Naive thymus-derived CD4-positive, alpha-beta T cell (primary cell): ENCODE measurements at regions of chr22 and their contacts with region 1.

Region 1: GRCh38 chr22:18001040-18001893 is 23.1 kb downstream of the MICAL3 start:
- DNase-seq: peak in 8 of 9 donors; percentile 18 to 77 (median 49)
- ATAC-seq: peak; percentile 69
- H3K4me3 ChIP-seq: peak overlapping the region; percentile 85
- H3K4me3 Mint-ChIP-seq: peak overlapping the region; percentile 79 to 96 (median 92)
- H3K27ac ChIP-seq: peak overlapping the region; percentile 63
- H3K27ac Mint-ChIP-seq: peak overlapping the region in 8 of 9 donors; percentile 62 to 97 (median 84)
- H3K4me1 ChIP-seq: peaks cover 13 to 20% of the 10 kb centered on the region in 2 donors
- H3K4me1 Mint-ChIP-seq: peaks cover 33 to 50% (median 47%) of the 10 kb centered on the region in 7 donors
- H3K27me3 ChIP-seq: no peaks in the 10 kb centered on the region
- H3K27me3 Mint-ChIP-seq: peaks cover 0 to 27% (median 3%) of the 10 kb centered on the region in 5 donors

Region 2: DNA sequence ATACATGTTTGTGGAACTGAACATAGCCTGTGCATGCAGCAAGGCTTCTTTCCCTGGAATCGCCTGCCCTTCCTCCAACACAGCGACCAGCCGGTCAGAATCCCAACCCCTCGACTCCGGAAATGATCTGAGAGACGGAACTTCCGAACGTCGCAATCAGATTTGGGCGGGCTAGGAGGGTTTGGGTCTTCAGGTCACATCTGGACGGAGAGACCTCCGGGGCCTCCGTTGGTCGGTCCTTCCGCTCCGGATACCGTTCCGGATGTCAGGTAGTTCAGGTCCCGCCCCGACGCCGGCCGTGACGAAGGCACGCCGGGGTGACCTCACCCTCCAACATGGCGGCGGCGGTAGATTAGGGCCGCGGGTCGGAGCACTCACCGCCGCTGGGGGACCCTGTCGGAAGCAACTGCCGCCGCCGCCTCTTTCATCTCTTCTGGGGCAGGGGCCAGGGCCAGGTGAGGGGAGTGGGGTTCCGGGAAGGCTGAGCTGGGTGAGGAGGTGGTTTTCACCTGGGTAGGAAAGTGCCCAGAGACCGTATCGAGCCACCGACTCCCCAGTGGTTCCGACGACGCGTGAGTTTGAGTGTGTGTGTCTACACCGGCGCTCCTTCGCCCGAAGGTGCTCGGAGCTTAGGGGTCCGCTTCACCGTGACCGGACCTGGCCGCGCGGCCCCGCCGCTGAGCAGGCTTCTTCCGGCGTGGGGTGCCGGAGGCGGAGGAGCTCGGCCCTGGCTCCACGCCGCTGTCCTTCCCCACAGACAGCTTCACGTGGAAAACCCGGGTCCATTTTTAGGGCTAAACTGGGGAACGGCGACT is 362.6 kb before region 1 on chr22 and contains the start of gene BCL2L13:
- CTCF ChIA-PET with region 1: no interaction called
- POLR2A ChIA-PET with region 1: no interaction called
- intact Hi-C with region 1: loop called in 1 of 2 experiments (anchors 5 kb)
- DNase-seq: peak; percentile 77 to 91 (median 88)
- ATAC-seq: peak; percentile 96
- H3K4me3 ChIP-seq: peak within 1 kb of the TSS; percentile 73
- H3K4me3 Mint-ChIP-seq: peak within 1 kb of the TSS; percentile 87 to 95 (median 90)
- H3K27ac ChIP-seq: peak within 1 kb of the TSS; percentile 99
- H3K27ac Mint-ChIP-seq: peak within 1 kb of the TSS; percentile 92 to 99 (median 96)
- H3K4me1 ChIP-seq: peaks cover 12 to 18% of the 10 kb centered on the region in 2 donors
- H3K4me1 Mint-ChIP-seq: peaks cover 17 to 38% (median 34%) of the 10 kb centered on the region in 7 donors
- H3K27me3 ChIP-seq: no peaks in the 10 kb centered on the region
- H3K27me3 Mint-ChIP-seq: no peaks in the 10 kb centered on the region
- total RNA-seq, gene BCL2L13: 21.9 to 39.1 (median 32.8) TPM

Region 3: DNA sequence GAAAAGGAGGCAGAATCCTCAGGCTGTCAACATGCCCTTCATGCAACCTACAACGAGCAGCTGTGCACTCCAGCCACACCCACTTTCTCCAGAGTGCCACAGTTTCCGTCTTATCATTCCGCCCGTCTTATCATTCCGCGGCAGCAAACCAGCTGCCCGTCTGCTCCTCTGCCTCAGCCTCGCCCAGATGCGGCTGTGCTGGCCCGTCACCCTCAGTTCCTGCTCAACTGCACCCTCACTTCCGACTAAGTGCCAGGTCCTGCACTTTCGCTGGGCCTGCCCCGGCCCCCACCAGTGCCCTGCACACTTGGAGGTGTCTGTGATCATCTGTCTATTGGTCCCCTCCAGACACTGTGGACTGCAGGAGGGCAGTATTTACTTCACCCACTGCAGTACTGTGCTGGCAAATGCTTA is 20.6 kb before region 1 on chr22:
- CTCF ChIA-PET with region 1: no interaction called
- POLR2A ChIA-PET with region 1: interaction called, 3 read pairs
- intact Hi-C with region 1: loop called (anchors 1 to 2 kb)
- DNase-seq: peak in 8 of 9 donors; percentile 19 to 58 (median 36)
- ATAC-seq: peak; percentile 83
- H3K4me3 ChIP-seq: peak overlapping the region; percentile 19
- H3K4me3 Mint-ChIP-seq: peak overlapping the region; percentile 71 to 92 (median 81)
- H3K27ac ChIP-seq: no peak overlapping the region
- H3K27ac Mint-ChIP-seq: peak overlapping the region; percentile 0 to 93 (median 74)
- H3K4me1 ChIP-seq: peaks cover 10 to 16% of the 10 kb centered on the region in 2 donors
- H3K4me1 Mint-ChIP-seq: peaks cover 11 to 37% (median 25%) of the 10 kb centered on the region in 7 donors
- H3K27me3 ChIP-seq: no peaks in the 10 kb centered on the region
- H3K27me3 Mint-ChIP-seq: peaks cover 0 to 4% (median 0%) of the 10 kb centered on the region in 5 donors

Region 4: DNA sequence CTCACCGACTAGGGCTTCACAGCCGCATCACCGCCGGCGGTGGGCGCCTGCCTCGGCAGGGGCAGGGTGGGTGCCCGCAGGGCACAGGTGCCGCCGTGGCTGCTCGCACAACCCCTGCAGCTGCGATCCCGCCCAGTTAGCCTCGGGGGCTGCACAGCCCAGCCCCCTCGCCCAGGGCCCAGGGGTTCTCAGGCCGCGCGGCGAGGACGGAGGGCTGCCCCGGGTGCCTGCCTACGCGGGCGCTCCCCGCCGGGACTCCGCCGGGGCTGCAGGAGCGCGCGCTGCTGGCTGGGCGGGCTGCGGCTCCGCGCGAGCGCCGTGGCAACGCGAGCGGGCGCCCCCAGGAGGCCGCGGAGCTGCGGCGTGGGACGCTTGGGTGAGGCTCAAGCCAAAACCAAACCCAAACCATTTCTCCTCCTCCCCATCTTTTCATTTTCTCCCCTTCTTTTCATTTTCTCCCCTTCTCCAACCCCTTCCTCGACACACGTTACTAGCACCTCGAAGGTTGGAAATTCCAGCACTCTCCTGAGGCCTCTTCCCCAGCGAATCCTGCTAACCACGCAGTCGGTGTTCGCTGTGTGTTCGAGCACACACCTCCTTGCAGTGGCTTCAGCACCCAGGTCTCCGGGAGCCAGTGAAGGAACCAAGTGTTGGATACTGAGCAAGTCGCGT is 23.1 kb after region 1 on chr22 and contains the start of gene MICAL3:
- CTCF ChIA-PET with region 1: interaction called, 5 read pairs
- POLR2A ChIA-PET with region 1: interaction called, 3 read pairs
- intact Hi-C with region 1: loop called in 1 of 2 experiments (anchors 1 kb)
- DNase-seq: peak in 8 of 9 donors; percentile 22 to 79 (median 58)
- ATAC-seq: peak; percentile 95
- H3K4me3 ChIP-seq: peak within 1 kb of the TSS; percentile 57
- H3K4me3 Mint-ChIP-seq: peak within 1 kb of the TSS; percentile 76 to 95 (median 88)
- H3K27ac ChIP-seq: no peak within 1 kb of the TSS
- H3K27ac Mint-ChIP-seq: no peak within 1 kb of the TSS
- H3K4me1 ChIP-seq: peaks cover 0 to 4% of the 10 kb centered on the region in 2 donors
- H3K4me1 Mint-ChIP-seq: peaks cover 5 to 17% (median 10%) of the 10 kb centered on the region in 7 donors
- H3K27me3 ChIP-seq: no peaks in the 10 kb centered on the region
- H3K27me3 Mint-ChIP-seq: peaks cover 42 to 72% (median 49%) of the 10 kb centered on the region in 5 donors
- total RNA-seq, gene MICAL3: 10.0 to 43.9 (median 17.1) TPM